ENCODE measurements at regions of chr6 and their contacts with region 1.

Region 1: DNA sequence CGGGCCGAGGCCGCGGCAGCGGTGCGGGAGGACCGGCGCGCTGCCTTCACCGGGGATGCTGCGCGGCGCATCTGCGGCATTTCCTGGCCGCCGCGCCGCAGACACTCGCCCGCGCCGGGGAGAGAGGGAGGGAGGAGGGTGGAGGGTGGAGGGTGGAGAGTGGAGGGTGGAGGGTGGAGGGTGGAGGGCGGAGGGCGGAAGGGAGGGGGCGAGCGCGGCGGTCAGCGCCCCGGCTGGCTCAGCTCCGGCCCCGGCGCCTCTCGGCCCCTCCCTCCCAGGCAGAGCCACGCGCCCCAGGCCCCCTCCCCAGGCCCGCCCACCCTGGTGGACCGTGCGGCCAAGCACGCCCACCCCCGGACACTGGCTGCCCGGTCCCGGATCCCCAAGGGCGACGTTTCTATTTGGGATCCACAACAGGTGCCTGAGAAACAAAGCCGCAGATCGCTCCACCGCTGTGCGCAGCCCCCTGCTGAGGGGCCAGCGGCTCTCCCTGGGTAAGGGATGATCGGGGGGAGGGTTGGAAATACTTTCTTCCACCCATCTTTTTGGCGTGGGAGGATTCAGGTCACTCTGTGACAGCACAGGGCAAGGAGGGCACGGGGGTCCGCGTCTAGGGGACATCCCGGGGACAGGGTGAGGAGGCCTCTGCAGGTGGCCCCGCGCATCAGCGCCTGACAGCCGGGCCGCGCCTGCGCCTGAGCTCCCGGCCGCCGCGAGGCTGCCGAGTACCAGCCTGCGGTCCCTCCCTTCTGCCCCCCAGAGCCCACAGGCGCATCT is 111.1 kb upstream of the BEND6 start:
- DNase-seq: peak; percentile 78 to 89 (median 85)
- ATAC-seq: peak; percentile 80 to 95 (median 90)
- H3K4me3 ChIP-seq: peak overlapping the region; percentile 61 to 90 (median 75)
- H3K27ac ChIP-seq: peak overlapping the region; percentile 84 to 97 (median 92)
- H3K4me1 ChIP-seq: peaks cover 0 to 44% (median 13%) of the 10 kb centered on the region in 12 donors
- H3K27me3 ChIP-seq: no peaks in the 10 kb centered on the region
- CTCF ChIP-seq: peak in 10 of 12 donors; percentile 49 to 80 (median 66)
- POLR2A ChIP-seq: peak in 1 of 2 donors; percentile 54

Region 2: DNA sequence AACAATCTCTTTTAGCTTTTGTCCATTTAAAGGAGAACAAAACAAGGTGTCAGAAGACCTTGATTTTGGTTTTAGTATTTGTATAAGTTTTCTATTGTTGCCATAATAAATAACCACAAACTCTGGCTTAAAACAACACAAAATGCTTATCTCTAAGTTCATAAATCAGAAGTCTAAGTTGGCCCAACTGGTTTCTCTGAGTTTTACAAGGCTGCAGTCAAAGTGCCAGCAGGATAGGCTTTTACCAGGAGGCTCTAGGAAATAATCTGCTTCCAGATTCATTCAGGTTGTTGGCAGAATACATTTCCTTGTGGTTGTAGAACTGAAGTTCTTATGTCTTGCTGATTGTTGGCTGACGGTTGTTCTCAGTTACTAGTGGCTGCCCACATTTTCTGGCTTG is 1117.6 kb before region 1 on chr6:
- intact Hi-C with region 1: no loop called
- DNase-seq: no peak
- ATAC-seq: no peak
- H3K4me3 ChIP-seq: no peak overlapping the region
- H3K27ac ChIP-seq: no peak overlapping the region
- H3K4me1 ChIP-seq: no peaks in the 10 kb centered on the region
- H3K27me3 ChIP-seq: no peaks in the 10 kb centered on the region
- CTCF ChIP-seq: no peak
- POLR2A ChIP-seq: no peak

Region 3: DNA sequence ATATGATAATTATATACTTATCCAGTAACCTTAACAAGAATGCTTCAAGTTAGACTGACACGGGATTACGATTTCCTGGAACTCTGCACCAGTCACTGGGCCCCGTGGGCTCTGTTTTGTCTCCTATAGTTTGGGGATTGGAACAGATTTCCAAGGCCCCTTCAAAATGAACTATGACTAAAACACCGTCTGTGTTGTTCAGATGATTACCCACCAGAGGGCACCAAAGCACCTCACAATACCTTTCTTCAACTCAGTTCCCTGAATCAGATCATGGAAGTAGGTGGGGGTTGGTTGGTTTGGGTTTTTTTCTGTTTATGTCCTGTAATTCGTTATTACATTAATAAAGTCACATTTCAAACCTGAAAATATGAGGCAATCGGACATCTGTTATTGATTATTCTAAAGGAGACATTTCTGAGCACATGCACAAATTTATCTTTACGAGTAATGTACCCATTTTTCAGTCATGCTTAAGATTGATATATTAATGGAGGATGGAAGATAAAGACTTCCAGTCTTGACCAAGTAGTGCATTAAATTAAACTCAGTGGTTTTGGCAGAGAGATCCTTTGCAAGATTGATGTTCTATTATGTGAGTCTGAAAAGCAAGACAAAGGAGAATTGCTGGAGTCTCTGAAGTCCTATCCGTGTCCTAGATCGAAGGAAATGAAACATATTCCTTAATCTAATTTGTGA is 484.4 kb before region 1 on chr6:
- intact Hi-C with region 1: no loop called
- DNase-seq: peak in 4 of 5 donors; percentile 36 to 60 (median 56)
- ATAC-seq: peak; percentile 34 to 80 (median 70)
- H3K4me3 ChIP-seq: no peak overlapping the region
- H3K27ac ChIP-seq: no peak overlapping the region
- H3K4me1 ChIP-seq: peaks cover 0 to 11% (median 1%) of the 10 kb centered on the region in 12 donors
- H3K27me3 ChIP-seq: no peaks in the 10 kb centered on the region
- CTCF ChIP-seq: peak; percentile 71 to 94 (median 82)
- POLR2A ChIP-seq: no peak

Region 4: GRCh38 chr6:56708810-56709597 is 134.8 kb before region 1 on chr6:
- intact Hi-C with region 1: loop called in 2 of 10 experiments (anchors 5 kb)
- DNase-seq: no peak
- ATAC-seq: peak in 2 of 4 donors; percentile 25 to 31
- H3K4me3 ChIP-seq: no peak overlapping the region
- H3K27ac ChIP-seq: peak overlapping the region in 11 of 12 donors; percentile 9 to 72 (median 49)
- H3K4me1 ChIP-seq: peaks cover 0 to 48% (median 25%) of the 10 kb centered on the region in 12 donors
- H3K27me3 ChIP-seq: no peaks in the 10 kb centered on the region
- CTCF ChIP-seq: peak; percentile 60 to 77 (median 72)
- POLR2A ChIP-seq: no peak

Region 5: DNA sequence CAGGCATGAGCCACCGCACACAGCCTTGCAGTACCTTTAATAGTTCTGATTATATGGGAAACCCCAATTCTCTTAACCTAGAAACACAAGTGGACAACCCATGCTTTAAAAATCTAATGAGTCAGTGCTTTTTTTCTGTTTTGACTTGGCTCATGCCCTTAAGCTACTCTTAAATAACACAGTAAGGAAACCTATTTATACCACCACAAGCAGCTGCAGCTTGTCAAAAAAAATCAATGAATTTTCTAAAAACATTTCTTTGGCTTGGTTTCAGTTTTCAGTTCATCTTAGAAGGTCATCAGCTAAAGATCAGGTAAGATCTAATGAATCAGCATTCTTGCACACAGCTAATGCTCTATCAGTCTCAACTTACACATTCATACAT is 77.0 kb before region 1 on chr6:
- intact Hi-C with region 1: loop called in 9 of 10 experiments (anchors 1 to 5 kb)
- DNase-seq: no peak
- ATAC-seq: no peak
- H3K4me3 ChIP-seq: no peak overlapping the region
- H3K27ac ChIP-seq: peak overlapping the region in 2 of 12 donors; percentile 12 to 22
- H3K4me1 ChIP-seq: peaks cover 0 to 85% (median 59%) of the 10 kb centered on the region in 12 donors
- H3K27me3 ChIP-seq: no peaks in the 10 kb centered on the region
- CTCF ChIP-seq: no peak
- POLR2A ChIP-seq: no peak

Region 6: GRCh38 chr6:56772737-56773184 is 71.0 kb before region 1 on chr6:
- intact Hi-C with region 1: loop called in 9 of 10 experiments (anchors 1 to 5 kb)
- DNase-seq: peak in 4 of 5 donors; percentile 29 to 66 (median 44)
- ATAC-seq: peak; percentile 53 to 75 (median 64)
- H3K4me3 ChIP-seq: no peak overlapping the region
- H3K27ac ChIP-seq: peak overlapping the region in 11 of 12 donors; percentile 12 to 78 (median 66)
- H3K4me1 ChIP-seq: peaks cover 0 to 80% (median 65%) of the 10 kb centered on the region in 12 donors
- H3K27me3 ChIP-seq: no peaks in the 10 kb centered on the region
- CTCF ChIP-seq: no peak
- POLR2A ChIP-seq: no peak

Region 7: DNA sequence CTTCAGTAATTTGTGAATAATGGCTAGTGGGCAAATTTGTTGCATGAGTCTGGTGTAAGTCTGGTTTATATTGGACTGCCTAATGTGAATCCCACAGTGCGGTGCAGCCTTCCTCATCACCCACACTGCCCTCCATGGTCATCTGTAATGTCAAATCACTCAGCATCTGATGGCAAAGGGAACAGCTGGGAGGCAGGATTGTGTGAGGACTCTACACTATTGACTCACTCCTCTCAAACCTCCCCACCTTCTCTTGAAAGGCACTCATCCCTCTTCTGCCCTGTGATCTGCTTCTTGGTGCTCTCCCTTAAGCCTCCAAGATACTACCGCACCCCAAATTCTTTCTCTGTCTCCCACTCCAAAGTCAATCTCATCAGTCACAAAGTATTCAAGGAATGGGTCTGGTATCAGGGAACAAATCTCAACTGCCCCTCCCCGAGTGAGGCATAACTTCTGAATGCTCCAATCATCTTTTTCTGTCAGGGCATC is 34.8 kb before region 1 on chr6:
- intact Hi-C with region 1: loop called in 3 of 10 experiments (anchors 2 to 5 kb)
- DNase-seq: no peak
- ATAC-seq: peak in 3 of 4 donors; percentile 46 to 83 (median 65)
- H3K4me3 ChIP-seq: peak overlapping the region in 1 of 12 donors; percentile 8
- H3K27ac ChIP-seq: peak overlapping the region in 9 of 12 donors; percentile 6 to 72 (median 42)
- H3K4me1 ChIP-seq: peaks cover 2 to 74% (median 26%) of the 10 kb centered on the region in 12 donors
- H3K27me3 ChIP-seq: no peaks in the 10 kb centered on the region
- CTCF ChIP-seq: no peak
- POLR2A ChIP-seq: no peak

Region 8: DNA sequence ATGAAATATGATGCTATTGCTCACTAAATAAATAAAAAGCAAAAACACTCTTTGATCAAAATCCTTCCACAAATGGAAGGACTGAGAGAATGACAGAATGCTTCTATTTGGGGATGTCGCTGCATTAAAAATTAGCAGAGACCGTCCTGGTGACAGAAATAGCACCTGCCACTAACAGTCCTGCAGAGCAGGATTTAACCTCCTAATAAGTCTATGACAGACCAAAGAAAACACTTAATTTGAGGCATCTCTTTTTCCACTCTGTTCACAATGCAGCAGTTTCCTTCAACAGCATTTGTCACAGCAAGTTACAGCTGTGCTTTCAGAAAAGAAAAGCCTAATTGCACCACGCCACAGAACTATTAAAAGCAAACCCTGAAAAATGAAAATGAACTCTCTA is 29.5 kb before region 1 on chr6:
- intact Hi-C with region 1: loop called in 3 of 10 experiments (anchors 2 to 5 kb)
- DNase-seq: no peak
- ATAC-seq: peak in 3 of 4 donors; percentile 56 to 80 (median 56)
- H3K4me3 ChIP-seq: peak overlapping the region in 7 of 12 donors; percentile 3 to 37 (median 13)
- H3K27ac ChIP-seq: peak overlapping the region; percentile 15 to 75 (median 47)
- H3K4me1 ChIP-seq: peaks cover 5 to 57% (median 31%) of the 10 kb centered on the region in 12 donors
- H3K27me3 ChIP-seq: no peaks in the 10 kb centered on the region
- CTCF ChIP-seq: no peak
- POLR2A ChIP-seq: no peak